ENCODE measurements at regions of chr17 and their contacts with region 1.

Region 1: GRCh38 chr17:46782250-46782953 is 36.1 kb downstream of the WNT3 start:
- H3K4me3 ChIP-seq: no peak overlapping the region
- H3K27ac ChIP-seq: no peak overlapping the region
- H3K4me1 ChIP-seq: no peaks in the 10 kb centered on the region
- CTCF ChIP-seq: peak; percentile 76

Region 2: GRCh38 chr17:46795379-46795952 is 13.1 kb after region 1 on chr17:
- CTCF ChIA-PET with region 1: interaction called, 15 read pairs
- POLR2A ChIA-PET with region 1: no interaction called
- H3K4me3 ChIP-seq: no peak overlapping the region
- H3K27ac ChIP-seq: no peak overlapping the region
- H3K4me1 ChIP-seq: no peaks in the 10 kb centered on the region
- CTCF ChIP-seq: no peak

Measured in HEK293 (cell line).